T-cell (primary cell): ENCODE measurements at regions of chr17 and their contacts with region 1.

Region 1: DNA sequence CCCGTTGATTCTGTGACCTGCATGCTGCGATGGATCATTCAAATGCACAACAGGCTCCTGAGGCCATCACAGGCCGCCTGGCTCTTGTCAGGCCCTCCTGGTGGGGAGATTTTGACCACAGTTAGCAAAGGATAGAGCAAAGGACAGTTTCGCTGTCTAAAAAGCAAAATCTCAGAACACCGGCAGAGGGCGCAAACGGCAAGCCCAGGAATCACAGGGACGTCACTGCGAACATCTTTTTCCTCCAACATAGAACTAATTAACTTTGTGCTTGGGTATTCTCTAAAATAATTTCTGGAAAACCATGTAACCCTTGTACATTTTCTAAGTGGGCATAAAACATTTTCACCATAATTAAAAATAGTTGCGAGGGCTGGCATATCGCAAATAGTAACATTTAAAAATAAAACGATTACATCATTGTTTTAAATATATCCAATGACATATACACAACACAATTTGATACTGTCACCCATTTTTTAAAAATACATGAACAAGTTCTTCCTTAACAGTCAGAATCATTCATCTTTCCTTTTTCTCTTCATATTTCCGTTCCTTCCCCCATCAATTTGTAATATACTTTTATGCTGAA is 19.7 kb upstream of the SLC47A1 start:
- DNase-seq: peak; percentile 27 to 81 (median 58)
- ATAC-seq: peak; percentile 57 to 73 (median 63)
- H3K4me3 ChIP-seq: no peak overlapping the region
- H3K4me3 Mint-ChIP-seq: no peak overlapping the region
- H3K27ac ChIP-seq: no peak overlapping the region
- H3K27ac Mint-ChIP-seq: no peak overlapping the region
- H3K4me1 ChIP-seq: peaks cover 0 to 4% of the 10 kb centered on the region in 2 experiments
- H3K4me1 Mint-ChIP-seq: peaks cover 3 to 5% (median 5%) of the 10 kb centered on the region in 3 donors
- H3K27me3 ChIP-seq: peaks cover 0 to 3% of the 10 kb centered on the region in 2 experiments
- H3K27me3 Mint-ChIP-seq: no peaks in the 10 kb centered on the region

Region 2: GRCh38 chr17:19788876-19789275 is 274.9 kb after region 1 on chr17:
- CTCF ChIA-PET with region 1: interaction called, 3 to 11 read pairs
- POLR2A ChIA-PET with region 1: no interaction called
- DNase-seq: no peak
- ATAC-seq: no peak
- H3K4me3 ChIP-seq: no peak overlapping the region
- H3K4me3 Mint-ChIP-seq: no peak overlapping the region
- H3K27ac ChIP-seq: no peak overlapping the region
- H3K27ac Mint-ChIP-seq: no peak overlapping the region
- H3K4me1 ChIP-seq: no peaks in the 10 kb centered on the region
- H3K4me1 Mint-ChIP-seq: peaks cover 0 to 6% (median 0%) of the 10 kb centered on the region in 3 donors
- H3K27me3 ChIP-seq: no peaks in the 10 kb centered on the region
- H3K27me3 Mint-ChIP-seq: no peaks in the 10 kb centered on the region